Naive thymus-derived CD8-positive, alpha-beta T cell (primary cell): ENCODE measurements at regions of chr3 and their contacts with region 1.

Region 1: DNA sequence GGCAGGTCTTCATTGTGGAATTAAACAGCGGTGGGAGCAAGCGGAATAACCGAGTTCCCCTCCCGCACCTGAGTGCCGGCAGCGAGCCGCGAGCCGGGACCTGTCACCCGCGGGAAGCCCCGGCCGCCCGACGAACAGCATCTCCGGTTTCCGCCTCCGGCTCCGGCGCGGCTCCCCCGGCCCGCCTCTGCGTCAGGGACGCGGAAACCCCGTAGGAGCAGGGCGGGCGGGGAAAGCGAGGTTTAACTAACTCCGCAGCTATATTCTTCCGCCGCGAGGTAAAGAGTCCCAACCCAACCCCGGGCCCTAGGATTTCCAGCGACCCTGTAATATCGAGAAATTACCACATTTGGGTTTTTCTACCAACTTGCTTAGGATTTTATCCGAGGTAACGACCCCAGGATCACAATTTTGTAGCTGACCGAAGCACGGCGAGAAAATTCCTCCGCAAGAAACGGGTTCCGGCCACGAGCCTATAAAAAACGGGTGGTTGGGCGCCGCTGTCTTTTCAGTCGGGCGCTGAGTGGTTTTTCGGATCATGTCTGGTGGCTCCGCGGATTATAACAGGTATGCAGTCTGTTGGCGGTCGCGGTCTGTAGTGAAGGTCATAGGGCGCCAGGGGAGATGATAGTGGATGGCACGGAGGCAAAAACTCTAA is at the start of gene EIF4A2:
- DNase-seq: peak; percentile 84 to 97 (median 88)
- ATAC-seq: peak; percentile 69 to 70
- H3K4me3 Mint-ChIP-seq: peak within 1 kb of the TSS; percentile 98 to 100 (median 99)
- H3K27ac Mint-ChIP-seq: peak within 1 kb of the TSS; percentile 99 to 100 (median 100)
- H3K4me1 Mint-ChIP-seq: peaks cover 27 to 55% (median 52%) of the 10 kb centered on the region in 4 donors
- H3K27me3 Mint-ChIP-seq: no peaks in the 10 kb centered on the region
- polyA plus RNA-seq, gene EIF4A2: 221 to 293 (median 226) TPM

Region 2: GRCh38 chr3:186570096-186570940 is 212.9 kb before region 1 on chr3 and contains the start of gene DNAJB11:
- POLR2A ChIA-PET with region 1: interaction called, 85 read pairs
- DNase-seq: peak; percentile 92 to 99 (median 98)
- ATAC-seq: peak; percentile 84 to 86
- H3K4me3 Mint-ChIP-seq: peak within 1 kb of the TSS; percentile 91 to 99 (median 96)
- H3K27ac Mint-ChIP-seq: peak within 1 kb of the TSS; percentile 78 to 99 (median 98)
- H3K4me1 Mint-ChIP-seq: peaks cover 28 to 65% (median 53%) of the 10 kb centered on the region in 4 donors
- H3K27me3 Mint-ChIP-seq: no peaks in the 10 kb centered on the region
- polyA plus RNA-seq, gene DNAJB11: 31.0 to 41.1 (median 31.4) TPM

Region 3: GRCh38 chr3:186772701-186773424 is 10.3 kb before region 1 on chr3:
- POLR2A ChIA-PET with region 1: interaction called, 216 read pairs
- DNase-seq: peak; percentile 13 to 75 (median 49)
- ATAC-seq: peak; percentile 82 to 87
- H3K4me3 Mint-ChIP-seq: peak overlapping the region; percentile 87 to 98 (median 92)
- H3K27ac Mint-ChIP-seq: peak overlapping the region; percentile 88 to 97 (median 94)
- H3K4me1 Mint-ChIP-seq: peaks cover 7 to 18% (median 17%) of the 10 kb centered on the region in 4 donors
- H3K27me3 Mint-ChIP-seq: no peaks in the 10 kb centered on the region

Region 4: GRCh38 chr3:186806089-186807055 is 23.2 kb after region 1 on chr3 and contains the start of gene RFC4:
- POLR2A ChIA-PET with region 1: interaction called, 97 read pairs
- DNase-seq: peak; percentile 68 to 90 (median 80)
- ATAC-seq: peak; percentile 86 to 87
- H3K4me3 Mint-ChIP-seq: peak within 1 kb of the TSS; percentile 84 to 97 (median 96)
- H3K27ac Mint-ChIP-seq: peak within 1 kb of the TSS; percentile 93 to 99 (median 96)
- H3K4me1 Mint-ChIP-seq: peaks cover 4 to 31% (median 21%) of the 10 kb centered on the region in 4 donors
- H3K27me3 Mint-ChIP-seq: no peaks in the 10 kb centered on the region
- polyA plus RNA-seq, gene RFC4: 19.2 to 22.8 (median 21.4) TPM

Region 5: GRCh38 chr3:186888569-186888968 is 105.4 kb after region 1 on chr3:
- POLR2A ChIA-PET with region 1: no interaction called
- DNase-seq: no peak
- ATAC-seq: no peak
- H3K4me3 Mint-ChIP-seq: no peak overlapping the region
- H3K27ac Mint-ChIP-seq: peak overlapping the region in 3 of 10 donors; percentile 13 to 21 (median 16)
- H3K4me1 Mint-ChIP-seq: peaks cover 9 to 25% (median 12%) of the 10 kb centered on the region in 4 donors
- H3K27me3 Mint-ChIP-seq: no peaks in the 10 kb centered on the region

Region 6: DNA sequence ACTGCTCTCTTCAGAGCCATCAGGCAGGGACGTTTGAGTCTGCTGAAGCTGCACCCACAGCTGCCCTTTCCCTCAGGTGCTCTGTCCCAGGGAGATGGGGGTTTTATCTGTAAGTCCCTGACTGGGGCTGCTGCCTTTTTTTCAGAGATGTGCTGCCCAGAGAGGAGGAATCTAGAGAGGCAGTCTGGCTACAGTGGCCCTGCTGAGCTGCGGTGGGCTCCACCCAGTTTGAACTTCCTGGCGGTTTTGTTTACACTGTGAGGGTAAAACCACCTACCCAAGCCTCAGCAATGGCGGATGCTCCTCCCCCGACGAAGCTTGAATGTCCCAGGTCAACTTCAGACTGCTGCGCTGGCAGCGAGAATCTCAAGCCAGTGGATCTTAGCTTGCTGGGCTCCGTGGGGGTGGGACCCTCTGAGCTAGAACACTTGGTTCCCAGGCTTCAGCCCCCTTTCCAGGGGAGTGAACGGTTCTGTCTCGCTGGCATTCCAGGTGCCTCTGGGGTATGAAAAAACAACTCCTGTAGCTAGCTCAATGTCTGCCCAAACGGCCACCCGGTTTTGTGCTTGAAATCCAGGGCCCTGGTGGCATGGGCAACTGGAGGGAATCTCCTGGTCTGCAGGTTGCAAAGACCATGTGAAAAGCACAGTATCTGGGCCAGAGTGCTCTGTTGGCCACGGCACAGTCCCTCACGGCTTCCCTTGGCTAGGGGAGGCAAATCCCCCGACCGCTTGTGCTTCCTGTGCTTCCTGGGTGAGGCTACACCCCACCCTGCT is 126.1 kb after region 1 on chr3:
- POLR2A ChIA-PET with region 1: interaction called, 19 read pairs
- DNase-seq: peak; percentile 25 to 88 (median 76)
- ATAC-seq: peak; percentile 96 to 97
- H3K4me3 Mint-ChIP-seq: peak overlapping the region; percentile 60 to 84 (median 74)
- H3K27ac Mint-ChIP-seq: peak overlapping the region; percentile 88 to 97 (median 92)
- H3K4me1 Mint-ChIP-seq: peaks cover 11 to 49% (median 37%) of the 10 kb centered on the region in 4 donors
- H3K27me3 Mint-ChIP-seq: no peaks in the 10 kb centered on the region

Region 7: GRCh38 chr3:186930641-186931531 is 147.7 kb after region 1 on chr3:
- POLR2A ChIA-PET with region 1: interaction called, 24 read pairs
- DNase-seq: peak; percentile 41 to 84 (median 65)
- ATAC-seq: peak; percentile 80
- H3K4me3 Mint-ChIP-seq: peak overlapping the region; percentile 95 to 100 (median 99)
- H3K27ac Mint-ChIP-seq: peak overlapping the region; percentile 93 to 97 (median 96)
- H3K4me1 Mint-ChIP-seq: peaks cover 26 to 51% (median 43%) of the 10 kb centered on the region in 4 donors
- H3K27me3 Mint-ChIP-seq: no peaks in the 10 kb centered on the region

Region 8: GRCh38 chr3:187139126-187139894 is 356.1 kb after region 1 on chr3 and contains the start of gene RPL39L:
- POLR2A ChIA-PET with region 1: interaction called, 19 read pairs
- DNase-seq: peak; percentile 87 to 96 (median 93)
- ATAC-seq: peak; percentile 95 to 96
- H3K4me3 Mint-ChIP-seq: peak within 1 kb of the TSS; percentile 84 to 94 (median 92)
- H3K27ac Mint-ChIP-seq: peak within 1 kb of the TSS; percentile 88 to 98 (median 96)
- H3K4me1 Mint-ChIP-seq: peaks cover 6 to 23% (median 12%) of the 10 kb centered on the region in 4 donors
- H3K27me3 Mint-ChIP-seq: no peaks in the 10 kb centered on the region
- polyA plus RNA-seq, gene RPL39L: 3.8 to 11.2 (median 4.4) TPM